Caco-2 (cell line): ENCODE measurements at regions of chr11 and their contacts with region 1.

Region 1: DNA sequence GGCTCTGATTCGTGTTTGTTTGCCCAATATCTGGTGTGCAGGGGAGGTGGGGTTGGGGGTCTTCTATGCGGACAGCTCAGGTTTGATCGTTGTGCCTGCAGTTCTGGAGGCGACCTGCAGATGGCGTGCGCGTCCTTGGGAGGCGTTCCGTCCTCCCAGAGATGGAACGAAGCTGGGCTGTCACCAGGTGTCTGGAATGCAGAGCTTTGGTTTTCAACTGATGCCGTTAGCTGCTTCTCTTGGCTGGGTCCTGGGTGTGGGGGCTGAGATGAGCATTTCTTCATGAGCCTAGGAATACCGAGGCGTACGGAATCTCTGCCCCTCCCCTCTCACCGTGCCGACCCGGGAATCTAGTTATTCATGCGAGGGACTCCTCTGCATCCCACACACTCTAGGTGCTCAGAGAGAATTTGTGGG is 98.6 kb downstream of the CEP164 start:
- DNase-seq: peak; percentile 85 to 91
- H3K4me3 ChIP-seq: no peak overlapping the region
- H3K4me3 Mint-ChIP-seq: no peak overlapping the region
- H3K27ac Mint-ChIP-seq: no peak overlapping the region
- H3K4me1 ChIP-seq: no peaks in the 10 kb centered on the region
- H3K4me1 Mint-ChIP-seq: no peaks in the 10 kb centered on the region
- H3K27me3 ChIP-seq: 0 out of 2 replicates have a peak, but pooled peaks cover 1% of the 10 kb centered on the region
- H3K27me3 Mint-ChIP-seq: peaks cover 12% of the 10 kb centered on the region
- CTCF ChIP-seq: peak; percentile 99 to 100

Region 2: GRCh38 chr11:117273550-117274289 is 152.6 kb before region 1 on chr11:
- CTCF ChIA-PET with region 1: no interaction called
- POLR2A ChIA-PET with region 1: no interaction called
- intact Hi-C with region 1: no loop called
- DNase-seq: no peak
- H3K4me3 ChIP-seq: no peak overlapping the region
- H3K4me3 Mint-ChIP-seq: no peak overlapping the region
- H3K27ac Mint-ChIP-seq: no peak overlapping the region
- H3K4me1 ChIP-seq: peaks cover 28% of the 10 kb centered on the region
- H3K4me1 Mint-ChIP-seq: peaks cover 20% of the 10 kb centered on the region
- H3K27me3 ChIP-seq: no peaks in the 10 kb centered on the region
- H3K27me3 Mint-ChIP-seq: no peaks in the 10 kb centered on the region
- CTCF ChIP-seq: no peak

Region 3: GRCh38 chr11:117443266-117444195 is 17.3 kb after region 1 on chr11:
- CTCF ChIA-PET with region 1: interaction called, 43 read pairs
- POLR2A ChIA-PET with region 1: no interaction called
- intact Hi-C with region 1: no loop called
- DNase-seq: peak; percentile 78 to 84
- H3K4me3 ChIP-seq: no peak overlapping the region
- H3K4me3 Mint-ChIP-seq: no peak overlapping the region
- H3K27ac Mint-ChIP-seq: no peak overlapping the region
- H3K4me1 ChIP-seq: no peaks in the 10 kb centered on the region
- H3K4me1 Mint-ChIP-seq: no peaks in the 10 kb centered on the region
- H3K27me3 ChIP-seq: no peaks in the 10 kb centered on the region; the same call in 1 of the 2 replicates
- H3K27me3 Mint-ChIP-seq: peaks cover 41% of the 10 kb centered on the region
- CTCF ChIP-seq: peak; percentile 86 to 98

Region 4: DNA sequence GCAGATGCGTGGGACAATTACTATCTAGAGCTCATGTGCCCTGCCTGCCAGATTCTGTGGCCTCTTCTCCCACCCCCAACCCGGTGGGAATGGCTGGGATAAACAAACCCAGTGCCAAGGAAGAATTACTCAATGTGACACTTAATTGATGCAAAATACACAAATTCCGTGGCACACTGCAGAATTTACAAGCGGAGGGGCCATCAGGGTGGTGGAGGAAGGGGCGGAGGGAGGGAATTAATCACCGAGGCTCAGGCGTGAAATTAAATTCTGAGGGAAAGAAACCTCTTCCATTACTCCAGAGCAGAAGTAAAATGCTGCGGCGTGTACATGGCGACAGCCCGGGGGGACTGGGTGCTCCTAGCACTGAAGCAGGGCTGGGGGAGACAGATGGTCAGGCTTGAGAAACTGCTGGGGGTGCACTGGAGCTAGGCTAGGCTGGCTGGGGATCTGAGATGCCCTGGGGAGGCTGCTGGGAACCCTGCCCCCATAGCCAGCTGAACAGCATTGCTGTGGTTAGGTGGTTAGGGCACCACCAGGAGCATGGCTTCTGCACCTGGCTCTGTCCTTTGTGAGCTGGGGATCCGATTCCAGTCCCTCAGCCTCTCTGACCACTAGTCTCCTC is 101.9 kb after region 1 on chr11:
- CTCF ChIA-PET with region 1: interaction called, 11 read pairs
- POLR2A ChIA-PET with region 1: no interaction called
- intact Hi-C with region 1: no loop called
- DNase-seq: no peak
- H3K4me3 ChIP-seq: no peak overlapping the region
- H3K4me3 Mint-ChIP-seq: no peak overlapping the region
- H3K27ac Mint-ChIP-seq: no peak overlapping the region
- H3K4me1 ChIP-seq: no peaks in the 10 kb centered on the region
- H3K4me1 Mint-ChIP-seq: no peaks in the 10 kb centered on the region
- H3K27me3 ChIP-seq: no peaks in the 10 kb centered on the region; the same call in 1 of the 2 replicates
- H3K27me3 Mint-ChIP-seq: peaks cover 10% of the 10 kb centered on the region
- CTCF ChIP-seq: no peak

Region 5: GRCh38 chr11:117621226-117621625 is 194.9 kb after region 1 on chr11:
- CTCF ChIA-PET with region 1: interaction called, 30 read pairs
- POLR2A ChIA-PET with region 1: no interaction called
- intact Hi-C with region 1: no loop called
- DNase-seq: peak in 1 of 2 experiments; percentile 25
- H3K4me3 ChIP-seq: no peak overlapping the region
- H3K4me3 Mint-ChIP-seq: no peak overlapping the region
- H3K27ac Mint-ChIP-seq: no peak overlapping the region
- H3K4me1 ChIP-seq: no peaks in the 10 kb centered on the region
- H3K4me1 Mint-ChIP-seq: peaks cover 8% of the 10 kb centered on the region
- H3K27me3 ChIP-seq: 0 out of 2 replicates have a peak, but pooled peaks cover 2% of the 10 kb centered on the region
- H3K27me3 Mint-ChIP-seq: peaks cover 8% of the 10 kb centered on the region
- CTCF ChIP-seq: peak; percentile 47 to 57

Region 6: GRCh38 chr11:117807482-117808327 is 381.4 kb after region 1 on chr11:
- CTCF ChIA-PET with region 1: interaction called, 132 read pairs
- POLR2A ChIA-PET with region 1: no interaction called
- intact Hi-C with region 1: loop called (anchors 1 kb)
- DNase-seq: peak; percentile 76 to 85
- H3K4me3 ChIP-seq: no peak overlapping the region
- H3K4me3 Mint-ChIP-seq: no peak overlapping the region
- H3K27ac Mint-ChIP-seq: no peak overlapping the region
- H3K4me1 ChIP-seq: no peaks in the 10 kb centered on the region
- H3K4me1 Mint-ChIP-seq: no peaks in the 10 kb centered on the region
- H3K27me3 ChIP-seq: no peaks in the 10 kb centered on the region
- H3K27me3 Mint-ChIP-seq: peaks cover 15% of the 10 kb centered on the region
- CTCF ChIP-seq: peak; percentile 97 to 98

Region 7: GRCh38 chr11:117946842-117947526 is 520.7 kb after region 1 on chr11:
- CTCF ChIA-PET with region 1: interaction called, 22 read pairs
- POLR2A ChIA-PET with region 1: no interaction called
- intact Hi-C with region 1: no loop called
- DNase-seq: peak; percentile 90 to 96
- H3K4me3 ChIP-seq: no peak overlapping the region
- H3K4me3 Mint-ChIP-seq: no peak overlapping the region
- H3K27ac Mint-ChIP-seq: no peak overlapping the region
- H3K4me1 ChIP-seq: peaks cover 4% of the 10 kb centered on the region
- H3K4me1 Mint-ChIP-seq: peaks cover 17% of the 10 kb centered on the region
- H3K27me3 ChIP-seq: no peaks in the 10 kb centered on the region
- H3K27me3 Mint-ChIP-seq: peaks cover 3% of the 10 kb centered on the region
- CTCF ChIP-seq: peak; percentile 99 to 100